ENCODE measurements at regions of chr2 and their contacts with region 1.

Region 1: GRCh38 chr2:98308068-98308467 is 38.2 kb upstream of the CNGA3 start:
- DNase-seq: no peak
- ATAC-seq: no peak
- H3K4me3 ChIP-seq: no peak overlapping the region
- H3K27ac ChIP-seq: no peak overlapping the region
- H3K4me1 ChIP-seq: no peaks in the 10 kb centered on the region
- H3K27me3 ChIP-seq: peaks cover 22% of the 10 kb centered on the region
- CTCF ChIP-seq: no peak

Region 2: GRCh38 chr2:98188351-98189049 is 119.6 kb before region 1 on chr2:
- CTCF ChIA-PET with region 1: no interaction called
- POLR2A ChIA-PET with region 1: no interaction called
- in situ Hi-C with region 1: no loop called
- intact Hi-C with region 1: no loop called
- DNase-seq: no peak
- ATAC-seq: 0 out of 2 replicates have a peak, but pooled peaks have one; percentile 42
- H3K4me3 ChIP-seq: no peak overlapping the region
- H3K27ac ChIP-seq: no peak overlapping the region
- H3K4me1 ChIP-seq: no peaks in the 10 kb centered on the region
- H3K27me3 ChIP-seq: peaks cover 19% of the 10 kb centered on the region
- CTCF ChIP-seq: no peak

Region 3: DNA sequence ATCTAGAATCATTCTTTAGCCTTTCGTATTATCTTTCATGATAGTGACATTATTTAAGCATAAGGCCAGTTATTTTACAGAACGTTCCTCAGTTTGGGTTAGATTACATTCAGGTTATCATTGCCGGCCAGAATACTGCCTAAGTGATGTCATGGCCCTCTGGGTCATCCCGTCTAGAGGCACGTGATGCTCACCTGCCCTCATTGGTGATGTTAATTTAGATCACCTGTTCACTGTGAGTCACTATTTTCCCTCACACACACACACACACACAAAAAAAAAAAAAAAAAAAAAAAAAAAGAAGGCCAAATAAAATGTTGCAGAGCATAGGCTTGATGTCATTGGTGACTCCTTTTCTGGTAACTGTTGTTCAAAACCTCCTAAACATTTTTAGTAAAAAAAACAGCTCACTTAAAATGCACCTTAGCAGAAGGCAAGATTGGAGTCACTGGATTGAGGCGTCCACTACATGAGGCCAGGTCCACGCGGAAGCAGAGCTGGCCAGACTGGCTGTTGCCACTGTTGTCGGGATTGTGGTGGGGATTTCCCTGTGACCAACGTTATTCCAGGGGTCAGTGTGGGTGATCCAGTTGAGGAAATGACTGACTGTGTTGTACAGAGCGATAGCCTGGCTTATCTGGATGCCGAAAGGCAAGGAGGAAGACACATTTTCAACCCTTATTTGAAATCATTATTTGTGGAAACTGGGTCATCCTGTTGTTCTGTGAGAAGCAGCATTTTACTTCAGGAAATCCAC is 14.0 kb before region 1 on chr2:
- CTCF ChIA-PET with region 1: no interaction called
- POLR2A ChIA-PET with region 1: interaction called, 13 read pairs
- in situ Hi-C with region 1: no loop called
- intact Hi-C with region 1: no loop called
- DNase-seq: no peak
- ATAC-seq: no peak
- H3K4me3 ChIP-seq: no peak overlapping the region
- H3K27ac ChIP-seq: no peak overlapping the region
- H3K4me1 ChIP-seq: no peaks in the 10 kb centered on the region
- H3K27me3 ChIP-seq: peaks cover 2% of the 10 kb centered on the region
- CTCF ChIP-seq: no peak

Region 4: GRCh38 chr2:98324181-98324580 is 16.1 kb after region 1 on chr2:
- CTCF ChIA-PET with region 1: no interaction called
- POLR2A ChIA-PET with region 1: interaction called, 11 read pairs
- in situ Hi-C with region 1: no loop called
- intact Hi-C with region 1: no loop called
- DNase-seq: no peak
- ATAC-seq: no peak
- H3K4me3 ChIP-seq: no peak overlapping the region
- H3K27ac ChIP-seq: no peak overlapping the region
- H3K4me1 ChIP-seq: no peaks in the 10 kb centered on the region
- H3K27me3 ChIP-seq: no peaks in the 10 kb centered on the region; the same call in 1 of the 2 replicates
- CTCF ChIP-seq: no peak

Measured in Panc1 (cell line).